CD14-positive monocyte (primary cell): ENCODE measurements at regions of chr11 and their contacts with region 1.

Region 1: DNA sequence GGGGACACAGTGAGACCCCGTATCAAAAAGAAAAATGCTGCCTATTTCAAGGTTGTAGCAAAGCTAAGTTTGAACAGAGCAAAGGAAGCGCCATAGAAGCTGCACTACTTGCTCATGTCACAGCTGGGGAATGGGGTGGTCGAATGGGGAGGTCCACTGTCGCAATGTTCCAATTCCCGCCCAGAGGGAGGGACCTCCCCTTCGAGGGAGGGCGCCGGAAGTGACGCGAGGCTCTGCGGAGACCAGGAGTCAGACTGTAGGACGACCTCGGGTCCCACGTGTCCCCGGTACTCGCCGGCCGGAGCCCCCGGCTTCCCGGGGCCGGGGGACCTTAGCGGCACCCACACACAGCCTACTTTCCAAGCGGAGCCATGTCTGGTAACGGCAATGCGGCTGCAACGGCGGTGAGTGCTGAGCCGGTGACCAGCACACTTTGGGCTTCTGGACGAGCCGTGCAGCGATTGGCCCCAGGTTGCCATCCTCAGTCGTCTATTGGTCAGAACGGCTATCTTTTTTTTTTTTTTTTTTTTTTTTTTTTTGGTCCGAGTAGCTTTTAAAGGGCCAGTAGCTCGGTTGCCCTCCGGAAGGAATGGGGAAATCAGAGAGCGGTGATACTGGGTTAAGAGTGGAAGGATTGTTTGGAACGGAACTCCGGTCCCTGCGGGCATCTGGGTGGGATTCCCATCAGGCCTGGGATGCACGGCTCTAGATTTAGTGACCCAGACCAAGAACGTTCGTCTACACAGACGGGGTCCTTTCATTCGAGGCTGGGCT is at the start of gene HMBS:
- DNase-seq: peak; percentile 87 to 97 (median 96)
- H3K4me3 ChIP-seq: peak within 1 kb of the TSS; percentile 50 to 96 (median 77)
- H3K4me3 Mint-ChIP-seq: peak within 1 kb of the TSS; percentile 92 to 98
- H3K27ac ChIP-seq: peak within 1 kb of the TSS; percentile 83 to 90
- H3K27ac Mint-ChIP-seq: peak within 1 kb of the TSS; percentile 89 to 97 (median 95)
- H3K4me1 ChIP-seq: peaks cover 25 to 32% of the 10 kb centered on the region in 2 donors
- H3K4me1 Mint-ChIP-seq: peaks cover 39% of the 10 kb centered on the region
- H3K27me3 ChIP-seq: no peaks in the 10 kb centered on the region
- H3K27me3 Mint-ChIP-seq: peaks cover 0 to 1% (median 1%) of the 10 kb centered on the region in 3 donors
- CTCF ChIP-seq: no peak
- polyA plus RNA-seq, gene HMBS: 21.1 to 26.4 (median 25.2) TPM

Region 2: GRCh38 chr11:119067371-119068222 is 17.3 kb before region 1 on chr11 and contains the start of gene VPS11:
- intact Hi-C with region 1: loop called in 1 of 2 experiments (anchors 2 kb)
- DNase-seq: peak; percentile 95 to 97 (median 96)
- H3K4me3 ChIP-seq: peak within 1 kb of the TSS; percentile 77 to 93 (median 89)
- H3K4me3 Mint-ChIP-seq: peak within 1 kb of the TSS; percentile 94 to 97
- H3K27ac ChIP-seq: peak within 1 kb of the TSS; percentile 91 to 96
- H3K27ac Mint-ChIP-seq: peak within 1 kb of the TSS; percentile 97 to 99 (median 98)
- H3K4me1 ChIP-seq: peaks cover 29 to 37% of the 10 kb centered on the region in 2 donors
- H3K4me1 Mint-ChIP-seq: peaks cover 33% of the 10 kb centered on the region
- H3K27me3 ChIP-seq: no peaks in the 10 kb centered on the region
- H3K27me3 Mint-ChIP-seq: peaks cover 0 to 3% (median 0%) of the 10 kb centered on the region in 3 donors
- CTCF ChIP-seq: no peak
- polyA plus RNA-seq, gene VPS11: 28.6 to 56.6 (median 43.3) TPM

Region 3: DNA sequence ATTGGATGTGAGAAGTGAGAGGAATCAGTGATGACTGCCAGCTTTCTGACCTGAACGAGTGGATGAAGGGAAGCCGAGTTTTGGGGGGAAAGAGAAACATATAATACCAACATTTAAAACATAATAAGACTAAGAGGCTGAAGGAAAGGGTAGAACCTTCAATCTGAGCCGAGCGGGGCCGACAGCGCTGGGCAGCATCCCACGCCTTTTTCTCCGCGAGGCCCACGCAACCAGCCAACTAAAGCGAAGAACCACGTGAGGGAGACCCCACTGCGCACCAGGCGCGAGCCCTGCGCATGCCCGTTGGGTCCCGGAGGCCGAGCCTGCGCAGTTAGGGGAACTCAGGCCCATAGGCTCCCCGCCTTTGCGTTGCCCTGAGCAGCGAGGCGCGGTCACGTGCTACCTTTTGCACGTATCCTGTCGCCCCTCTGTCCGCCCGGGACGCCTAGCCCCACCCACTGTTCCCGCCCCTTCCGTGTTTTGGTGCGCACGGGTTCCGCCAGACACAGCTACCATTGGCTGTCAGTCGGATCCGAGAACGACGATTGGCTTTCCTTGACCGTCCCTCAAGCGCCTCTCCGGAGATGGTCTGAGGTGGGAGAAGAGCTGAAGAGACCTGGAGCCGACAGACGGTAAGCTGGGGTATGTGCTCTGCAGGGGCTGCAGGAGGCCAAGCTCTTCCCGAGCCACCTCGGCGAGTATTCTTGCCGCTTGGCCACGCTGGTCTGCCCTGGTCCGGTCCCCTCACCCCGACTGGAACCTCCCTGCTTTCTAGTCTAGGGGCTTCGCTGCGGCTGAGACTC is 36.4 kb after region 1 on chr11 and contains the start of gene HINFP:
- intact Hi-C with region 1: loop called in 1 of 2 experiments (anchors 5 kb)
- DNase-seq: peak; percentile 98 to 99 (median 98)
- H3K4me3 ChIP-seq: peak within 1 kb of the TSS; percentile 62 to 97 (median 97)
- H3K4me3 Mint-ChIP-seq: peak within 1 kb of the TSS; percentile 90 to 93
- H3K27ac ChIP-seq: peak within 1 kb of the TSS; percentile 40 to 81
- H3K27ac Mint-ChIP-seq: peak within 1 kb of the TSS; percentile 83 to 94 (median 90)
- H3K4me1 ChIP-seq: peaks cover 32 to 39% of the 10 kb centered on the region in 2 donors
- H3K4me1 Mint-ChIP-seq: peaks cover 34% of the 10 kb centered on the region
- H3K27me3 ChIP-seq: no peaks in the 10 kb centered on the region
- H3K27me3 Mint-ChIP-seq: peaks cover 0 to 5% (median 0%) of the 10 kb centered on the region in 3 donors
- CTCF ChIP-seq: no peak
- polyA plus RNA-seq, gene HINFP: 8.0 to 43.0 (median 8.6) TPM